ENCODE measurements at regions of chr6 and their contacts with region 1.

Region 1: DNA sequence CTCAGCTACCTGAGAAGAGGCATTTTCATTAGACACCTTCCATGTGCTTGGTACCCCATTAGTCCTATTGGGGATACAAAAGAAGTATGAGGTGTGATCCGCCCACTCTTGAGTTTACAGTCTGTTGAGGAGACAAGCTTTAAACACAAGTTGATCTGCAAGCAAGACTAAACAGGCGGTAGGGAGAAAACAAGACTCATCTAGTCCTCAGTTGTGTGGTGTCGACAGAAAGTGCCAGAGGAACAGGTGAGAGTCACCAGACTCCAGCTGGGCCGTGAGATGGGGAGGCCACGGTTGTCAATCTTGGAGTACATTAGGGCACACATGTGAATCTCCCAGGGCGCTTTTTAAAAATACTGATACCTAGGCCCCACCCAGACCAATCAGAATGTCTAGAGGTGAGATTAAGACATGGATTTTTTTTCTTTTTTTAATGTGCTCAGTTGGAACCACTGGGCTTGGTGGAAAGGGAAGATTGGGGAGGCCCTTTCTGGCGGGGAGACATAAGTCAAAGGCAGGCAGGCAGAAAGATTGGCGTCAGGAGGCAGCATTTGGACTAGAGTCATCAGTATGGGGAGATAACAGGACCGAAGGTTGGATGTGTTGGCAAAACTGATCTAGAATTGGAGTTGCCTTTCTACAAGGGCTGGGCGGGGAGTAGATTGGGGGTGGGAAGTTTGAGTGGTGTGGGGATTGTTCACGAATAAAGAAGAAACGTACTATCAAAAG is 10.4 kb downstream of the E2F3 start:
- DNase-seq: no peak
- ATAC-seq: no peak
- H3K4me3 ChIP-seq: no peak overlapping the region
- H3K27ac ChIP-seq: no peak overlapping the region
- H3K4me1 ChIP-seq: peaks cover 0 to 83% (median 8%) of the 10 kb centered on the region in 12 donors
- H3K27me3 ChIP-seq: no peaks in the 10 kb centered on the region
- CTCF ChIP-seq: no peak
- POLR2A ChIP-seq: no peak

Region 2: GRCh38 chr6:19759117-19759880 is 652.8 kb before region 1 on chr6:
- intact Hi-C with region 1: no loop called
- DNase-seq: no peak
- ATAC-seq: no peak
- H3K4me3 ChIP-seq: no peak overlapping the region
- H3K27ac ChIP-seq: no peak overlapping the region
- H3K4me1 ChIP-seq: no peaks in the 10 kb centered on the region
- H3K27me3 ChIP-seq: no peaks in the 10 kb centered on the region
- CTCF ChIP-seq: no peak
- POLR2A ChIP-seq: no peak

Region 3: GRCh38 chr6:20279608-20280287 is 132.4 kb before region 1 on chr6:
- intact Hi-C with region 1: no loop called
- DNase-seq: no peak
- ATAC-seq: no peak
- H3K4me3 ChIP-seq: no peak overlapping the region
- H3K27ac ChIP-seq: no peak overlapping the region
- H3K4me1 ChIP-seq: no peaks in the 10 kb centered on the region
- H3K27me3 ChIP-seq: peaks cover 0 to 9% (median 0%) of the 10 kb centered on the region in 9 donors
- CTCF ChIP-seq: no peak
- POLR2A ChIP-seq: no peak

Region 4: GRCh38 chr6:20463396-20463795 is 51.3 kb after region 1 on chr6:
- intact Hi-C with region 1: loop called in 1 of 10 experiments (anchors 5 kb)
- DNase-seq: no peak
- ATAC-seq: no peak
- H3K4me3 ChIP-seq: no peak overlapping the region
- H3K27ac ChIP-seq: peak overlapping the region in 1 of 12 donors; percentile 47
- H3K4me1 ChIP-seq: peaks cover 0 to 15% (median 0%) of the 10 kb centered on the region in 12 donors
- H3K27me3 ChIP-seq: no peaks in the 10 kb centered on the region
- CTCF ChIP-seq: no peak
- POLR2A ChIP-seq: no peak